CD4-positive, alpha-beta memory T cell (primary cell): ENCODE measurements at regions of chrX and their contacts with region 1.

Region 1: GRCh38 chrX:111098874-111099273 is 2.9 kb downstream of the PAK3 start:
- DNase-seq: peak; percentile 73 to 77 (median 75)
- H3K4me3 ChIP-seq: peak overlapping the region in 1 of 2 donors; percentile 1
- H3K4me3 Mint-ChIP-seq: peak overlapping the region; percentile 21 to 73 (median 60)
- H3K27ac ChIP-seq: peak overlapping the region; percentile 12
- H3K27ac Mint-ChIP-seq: peak overlapping the region; percentile 69 to 95 (median 86)
- H3K4me1 ChIP-seq: peaks cover 23% of the 10 kb centered on the region
- H3K4me1 Mint-ChIP-seq: peaks cover 18 to 39% (median 26%) of the 10 kb centered on the region in 4 donors
- H3K27me3 ChIP-seq: no peaks in the 10 kb centered on the region
- H3K27me3 Mint-ChIP-seq: peaks cover 2% of the 10 kb centered on the region in 2 donors

Region 2: GRCh38 chrX:110450050-110450449 is 648.8 kb before region 1 on chrX:
- CTCF ChIA-PET with region 1: no interaction called
- POLR2A ChIA-PET with region 1: no interaction called
- intact Hi-C with region 1: loop called (anchors 1 kb)
- DNase-seq: peak; percentile 38 to 57 (median 45)
- H3K4me3 ChIP-seq: no peak overlapping the region
- H3K4me3 Mint-ChIP-seq: no peak overlapping the region
- H3K27ac ChIP-seq: no peak overlapping the region
- H3K27ac Mint-ChIP-seq: no peak overlapping the region
- H3K4me1 ChIP-seq: no peaks in the 10 kb centered on the region
- H3K4me1 Mint-ChIP-seq: no peaks in the 10 kb centered on the region
- H3K27me3 ChIP-seq: no peaks in the 10 kb centered on the region
- H3K27me3 Mint-ChIP-seq: peaks cover 3 to 5% of the 10 kb centered on the region in 2 donors

Region 3: GRCh38 chrX:110853610-110854009 is 245.3 kb before region 1 on chrX:
- CTCF ChIA-PET with region 1: no interaction called
- POLR2A ChIA-PET with region 1: no interaction called
- intact Hi-C with region 1: loop called (anchors 10 kb)
- DNase-seq: peak in 1 of 5 donors; percentile 2
- H3K4me3 ChIP-seq: no peak overlapping the region
- H3K4me3 Mint-ChIP-seq: no peak overlapping the region
- H3K27ac ChIP-seq: no peak overlapping the region
- H3K27ac Mint-ChIP-seq: no peak overlapping the region
- H3K4me1 ChIP-seq: no peaks in the 10 kb centered on the region
- H3K4me1 Mint-ChIP-seq: peaks cover 0 to 7% (median 0%) of the 10 kb centered on the region in 4 donors
- H3K27me3 ChIP-seq: no peaks in the 10 kb centered on the region
- H3K27me3 Mint-ChIP-seq: peaks cover 0 to 13% of the 10 kb centered on the region in 2 donors

Region 4: GRCh38 chrX:110992611-110993010 is 106.3 kb before region 1 on chrX:
- CTCF ChIA-PET with region 1: interaction called, 16 read pairs
- POLR2A ChIA-PET with region 1: no interaction called
- intact Hi-C with region 1: no loop called
- DNase-seq: peak; percentile 13 to 37 (median 33)
- H3K4me3 ChIP-seq: no peak overlapping the region
- H3K4me3 Mint-ChIP-seq: no peak overlapping the region
- H3K27ac ChIP-seq: no peak overlapping the region
- H3K27ac Mint-ChIP-seq: no peak overlapping the region
- H3K4me1 ChIP-seq: no peaks in the 10 kb centered on the region
- H3K4me1 Mint-ChIP-seq: no peaks in the 10 kb centered on the region
- H3K27me3 ChIP-seq: no peaks in the 10 kb centered on the region
- H3K27me3 Mint-ChIP-seq: peaks cover 6 to 10% of the 10 kb centered on the region in 2 donors

Region 5: GRCh38 chrX:111123125-111123524 is 24.3 kb after region 1 on chrX:
- CTCF ChIA-PET with region 1: interaction called, 5 read pairs
- POLR2A ChIA-PET with region 1: no interaction called
- intact Hi-C with region 1: loop called (anchors 2 kb)
- DNase-seq: peak in 2 of 5 donors; percentile 11 to 19
- H3K4me3 ChIP-seq: peak overlapping the region; percentile 36 to 41
- H3K4me3 Mint-ChIP-seq: peak overlapping the region; percentile 84 to 95 (median 91)
- H3K27ac ChIP-seq: peak overlapping the region; percentile 51
- H3K27ac Mint-ChIP-seq: peak overlapping the region; percentile 85 to 95 (median 90)
- H3K4me1 ChIP-seq: peaks cover 18% of the 10 kb centered on the region
- H3K4me1 Mint-ChIP-seq: peaks cover 6 to 24% (median 20%) of the 10 kb centered on the region in 4 donors
- H3K27me3 ChIP-seq: no peaks in the 10 kb centered on the region
- H3K27me3 Mint-ChIP-seq: no peaks in the 10 kb centered on the region

Region 6: GRCh38 chrX:111284631-111285293 is 185.9 kb after region 1 on chrX:
- CTCF ChIA-PET with region 1: no interaction called
- POLR2A ChIA-PET with region 1: no interaction called
- intact Hi-C with region 1: no loop called
- DNase-seq: no peak
- H3K4me3 ChIP-seq: no peak overlapping the region
- H3K4me3 Mint-ChIP-seq: no peak overlapping the region
- H3K27ac ChIP-seq: no peak overlapping the region
- H3K27ac Mint-ChIP-seq: no peak overlapping the region
- H3K4me1 ChIP-seq: no peaks in the 10 kb centered on the region
- H3K4me1 Mint-ChIP-seq: no peaks in the 10 kb centered on the region
- H3K27me3 ChIP-seq: no peaks in the 10 kb centered on the region
- H3K27me3 Mint-ChIP-seq: peaks cover 0 to 2% of the 10 kb centered on the region in 2 donors

Region 7: DNA sequence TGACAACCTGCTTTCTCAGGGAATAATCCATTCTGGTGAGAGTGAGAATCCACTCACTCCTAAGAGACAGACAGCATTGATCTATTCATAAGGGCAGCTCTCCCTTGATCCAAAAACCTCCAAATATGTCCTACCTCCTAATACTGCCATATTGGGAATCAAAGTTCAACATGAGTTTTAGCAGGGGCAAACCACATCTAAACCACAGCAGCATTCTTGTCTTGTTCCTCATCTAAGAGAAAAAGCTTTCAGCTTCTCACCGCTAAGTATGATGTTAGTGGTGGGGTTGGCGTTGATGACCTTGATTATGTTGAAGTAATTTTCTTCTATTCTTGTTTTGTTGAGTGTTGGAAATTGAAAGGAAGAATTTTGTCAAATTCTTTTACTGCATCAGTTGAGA is 482.2 kb after region 1 on chrX:
- CTCF ChIA-PET with region 1: no interaction called
- POLR2A ChIA-PET with region 1: no interaction called
- intact Hi-C with region 1: no loop called
- DNase-seq: no peak
- H3K4me3 ChIP-seq: no peak overlapping the region
- H3K4me3 Mint-ChIP-seq: no peak overlapping the region
- H3K27ac ChIP-seq: no peak overlapping the region
- H3K27ac Mint-ChIP-seq: no peak overlapping the region
- H3K4me1 ChIP-seq: no peaks in the 10 kb centered on the region
- H3K4me1 Mint-ChIP-seq: no peaks in the 10 kb centered on the region
- H3K27me3 ChIP-seq: no peaks in the 10 kb centered on the region
- H3K27me3 Mint-ChIP-seq: peaks cover 0 to 1% of the 10 kb centered on the region in 2 donors